Dendritic cell treated with granulocyte-macrophage colony-stimulating factor and Interleukin-4, amounts not matched to agents 40 ng/mL and 50 ng/mL, for 4 days (primary cell): ENCODE measurements at regions of chr3 and their contacts with region 1.

Region 1: DNA sequence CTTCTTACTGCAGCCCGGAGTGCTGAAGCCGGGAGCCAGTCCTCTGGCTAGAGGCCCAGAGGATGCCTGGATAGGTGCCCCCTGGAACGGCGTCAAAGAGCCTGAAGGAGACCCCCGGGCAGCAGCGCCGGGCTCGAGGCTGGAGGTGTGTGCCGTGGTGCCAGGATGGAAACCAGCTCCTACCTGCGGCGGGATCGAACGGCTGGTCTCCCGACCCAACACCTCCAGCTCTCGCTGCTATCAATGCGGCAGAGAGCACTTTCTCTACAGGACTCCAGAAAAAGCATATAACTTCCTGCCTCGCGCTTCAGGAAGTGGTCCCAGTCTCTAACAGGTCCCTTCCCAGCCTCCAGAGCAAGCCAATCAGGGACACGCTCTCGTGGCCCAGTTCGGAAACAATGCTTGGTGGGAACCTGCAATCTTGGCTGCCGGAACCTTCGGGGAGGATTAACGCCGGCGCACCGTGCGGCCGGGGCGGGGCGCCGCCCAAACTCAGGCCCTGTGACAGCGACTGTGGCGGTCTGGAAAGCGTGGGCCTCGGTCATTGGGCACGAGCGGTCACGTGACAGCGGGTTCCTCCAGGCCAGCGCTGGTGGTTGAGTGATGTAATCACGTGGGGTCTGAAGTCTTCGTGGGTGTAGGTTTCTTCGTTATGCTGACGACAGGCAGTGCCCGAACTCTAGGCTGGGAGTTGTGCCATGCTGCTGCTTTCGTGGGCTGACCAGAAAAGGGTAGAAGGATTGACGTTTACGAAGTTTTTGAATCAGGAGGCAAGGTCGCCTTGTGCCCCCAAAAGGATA is at the start of gene SLC33A1:
- H3K4me3 Mint-ChIP-seq: peak within 1 kb of the TSS; percentile 93
- H3K27ac Mint-ChIP-seq: peak within 1 kb of the TSS; percentile 100
- H3K4me1 Mint-ChIP-seq: peaks cover 36% of the 10 kb centered on the region
- H3K27me3 Mint-ChIP-seq: no peaks in the 10 kb centered on the region

Region 2: GRCh38 chr3:154829929-154830328 is 1024.4 kb before region 1 on chr3:
- intact Hi-C with region 1: no loop called
- H3K4me3 Mint-ChIP-seq: no peak overlapping the region
- H3K27ac Mint-ChIP-seq: no peak overlapping the region
- H3K4me1 Mint-ChIP-seq: no peaks in the 10 kb centered on the region
- H3K27me3 Mint-ChIP-seq: no peaks in the 10 kb centered on the region

Region 3: DNA sequence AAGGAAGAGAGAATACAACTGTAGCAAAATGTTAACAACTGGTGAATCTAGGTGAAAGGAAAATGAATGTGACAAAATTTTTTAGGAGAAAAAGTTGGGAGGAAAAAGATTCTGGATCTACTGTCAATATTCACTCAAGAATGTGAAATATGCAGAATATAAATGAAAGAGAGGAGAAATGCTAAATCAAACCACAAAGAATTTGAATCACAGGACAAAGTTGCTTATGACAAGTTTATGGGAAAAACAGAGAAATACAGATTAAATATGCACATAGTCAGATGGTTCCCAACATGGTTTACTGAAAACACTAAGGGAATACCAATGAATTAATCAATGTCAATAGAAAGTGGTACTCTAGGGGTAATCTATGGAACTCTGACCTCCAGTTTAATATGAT is 75.9 kb before region 1 on chr3:
- intact Hi-C with region 1: no loop called
- H3K4me3 Mint-ChIP-seq: no peak overlapping the region
- H3K27ac Mint-ChIP-seq: no peak overlapping the region
- H3K4me1 Mint-ChIP-seq: no peaks in the 10 kb centered on the region
- H3K27me3 Mint-ChIP-seq: no peaks in the 10 kb centered on the region

Region 4: DNA sequence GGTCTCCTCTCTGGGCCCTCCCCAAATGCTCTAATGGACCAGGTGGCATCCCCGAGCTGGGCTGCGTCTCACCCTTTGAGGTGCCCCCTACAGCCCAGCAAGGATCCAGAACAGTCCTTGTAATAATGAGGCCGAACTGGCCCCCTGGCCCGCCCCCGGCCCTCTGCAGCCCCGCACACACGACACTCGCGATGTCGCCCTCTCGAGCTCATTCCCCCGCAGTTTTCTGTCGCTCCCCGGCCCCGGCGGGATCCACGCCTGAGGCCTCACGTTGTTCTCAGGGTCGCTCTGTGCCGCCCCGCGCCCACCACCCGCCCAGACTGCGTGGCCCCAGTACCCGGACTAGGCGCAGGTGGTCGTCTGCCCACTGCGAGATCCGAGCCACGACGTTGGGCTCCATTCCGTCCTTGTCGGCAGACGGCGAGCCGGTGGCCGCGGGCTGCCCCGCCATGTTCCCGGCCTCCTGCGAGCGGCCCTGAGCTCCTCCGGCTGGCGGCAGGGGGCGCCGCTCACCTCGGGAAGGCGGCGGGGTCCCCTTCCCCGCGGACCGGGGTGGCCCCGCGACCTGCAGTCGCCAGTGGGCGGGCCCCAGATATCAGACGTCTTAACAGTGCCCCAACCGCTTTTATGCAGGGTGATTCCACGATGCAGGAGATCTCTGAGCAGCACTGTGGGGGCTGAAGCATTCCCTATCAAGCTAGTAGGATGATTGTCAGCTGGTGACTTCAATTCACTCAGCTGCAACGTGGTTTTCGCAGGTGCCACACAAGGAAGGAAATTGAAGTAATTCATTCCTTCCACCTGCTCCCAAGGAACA is 48.3 kb before region 1 on chr3 and contains the start of gene C3orf33:
- intact Hi-C with region 1: loop called (anchors 10 kb)
- H3K4me3 Mint-ChIP-seq: peak within 1 kb of the TSS; percentile 92
- H3K27ac Mint-ChIP-seq: peak within 1 kb of the TSS; percentile 92
- H3K4me1 Mint-ChIP-seq: no peaks in the 10 kb centered on the region
- H3K27me3 Mint-ChIP-seq: no peaks in the 10 kb centered on the region

Region 5: GRCh38 chr3:155835341-155836071 is 18.8 kb before region 1 on chr3:
- intact Hi-C with region 1: loop called (anchors 1 kb)
- H3K4me3 Mint-ChIP-seq: no peak overlapping the region
- H3K27ac Mint-ChIP-seq: no peak overlapping the region
- H3K4me1 Mint-ChIP-seq: no peaks in the 10 kb centered on the region
- H3K27me3 Mint-ChIP-seq: no peaks in the 10 kb centered on the region

Region 6: DNA sequence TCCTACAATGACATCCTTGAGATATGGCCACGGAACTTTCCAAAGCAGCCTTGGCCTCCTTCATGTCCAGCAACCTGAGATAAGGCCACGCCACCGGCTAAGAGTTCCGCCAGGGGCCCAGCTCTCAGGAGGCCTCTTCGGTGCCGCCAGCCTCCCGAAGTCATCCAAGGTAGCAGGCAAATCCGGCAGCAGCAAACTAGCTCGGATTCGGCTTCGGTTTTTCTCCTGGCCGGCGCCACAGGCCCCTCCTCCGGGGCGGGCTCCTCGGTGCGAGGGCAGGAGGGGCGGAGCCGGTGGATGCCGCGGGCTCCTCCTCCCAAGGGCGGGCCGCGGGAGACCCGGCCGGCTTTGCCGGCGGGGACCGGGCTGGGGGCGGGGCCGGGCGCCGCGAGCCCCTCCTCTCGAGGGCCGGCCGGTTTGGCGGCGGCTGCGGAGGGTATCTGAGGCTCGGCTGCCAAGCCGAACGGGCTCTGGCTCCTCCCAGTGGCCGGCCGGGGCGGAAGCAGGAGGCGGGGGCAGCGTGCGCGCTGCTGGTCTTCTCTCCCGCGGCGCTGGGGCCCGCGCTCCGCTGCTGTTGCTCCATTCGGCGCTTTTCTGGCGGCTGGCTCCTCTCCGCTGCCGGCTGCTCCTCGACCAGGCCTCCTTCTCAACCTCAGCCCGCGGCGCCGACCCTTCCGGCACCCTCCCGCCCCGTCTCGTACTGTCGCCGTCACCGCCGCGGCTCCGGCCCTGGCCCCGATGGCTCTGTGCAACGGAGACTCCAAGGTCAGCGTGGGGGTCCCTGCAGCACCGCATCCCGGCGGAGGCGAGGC is 16.0 kb after region 1 on chr3 and contains the start of gene GMPS:
- intact Hi-C with region 1: loop called (anchors 1 kb)
- H3K4me3 Mint-ChIP-seq: peak within 1 kb of the TSS; percentile 95
- H3K27ac Mint-ChIP-seq: peak within 1 kb of the TSS; percentile 93
- H3K4me1 Mint-ChIP-seq: peaks cover 13% of the 10 kb centered on the region
- H3K27me3 Mint-ChIP-seq: no peaks in the 10 kb centered on the region

Region 7: DNA sequence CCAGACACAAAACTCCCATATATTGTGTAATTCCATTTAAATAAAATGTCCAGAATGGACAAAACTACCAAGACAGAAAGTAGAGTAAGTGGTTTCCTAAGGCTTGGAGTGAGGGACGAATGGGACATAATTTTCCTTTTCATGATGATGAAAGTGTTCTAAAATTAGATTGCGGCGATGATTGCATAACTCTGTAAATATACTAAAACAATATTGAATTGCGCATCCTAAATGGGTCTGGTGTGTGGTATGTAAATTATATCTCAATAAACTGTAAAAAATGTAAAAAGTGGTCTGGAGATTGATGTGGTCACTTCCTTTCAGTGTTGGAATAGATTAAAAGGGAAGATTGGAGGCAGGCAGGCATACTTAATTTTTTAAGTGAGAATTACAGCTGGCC is 160.1 kb after region 1 on chr3:
- intact Hi-C with region 1: no loop called
- H3K4me3 Mint-ChIP-seq: no peak overlapping the region
- H3K27ac Mint-ChIP-seq: no peak overlapping the region
- H3K4me1 Mint-ChIP-seq: no peaks in the 10 kb centered on the region
- H3K27me3 Mint-ChIP-seq: no peaks in the 10 kb centered on the region

Region 8: DNA sequence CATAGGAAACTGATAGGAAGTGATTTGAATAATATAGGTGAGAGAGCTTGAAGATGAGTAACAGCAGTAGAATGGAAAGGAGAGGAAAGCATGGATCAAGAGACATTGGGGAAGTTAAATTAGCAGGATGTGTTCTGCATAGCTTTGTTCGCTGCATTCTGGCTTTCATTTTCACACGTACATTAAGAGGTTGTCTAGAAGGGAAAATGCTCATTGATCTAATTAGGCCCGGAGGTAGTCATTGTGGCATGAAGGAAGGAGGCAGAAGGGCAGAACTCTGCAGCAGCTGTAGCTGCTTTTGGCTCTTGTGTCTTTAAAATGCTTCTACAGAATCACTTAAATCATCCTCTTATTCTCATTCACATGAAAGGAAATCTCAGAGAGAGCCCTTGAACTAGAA is 306.3 kb after region 1 on chr3:
- intact Hi-C with region 1: no loop called
- H3K4me3 Mint-ChIP-seq: peak overlapping the region; percentile 21
- H3K27ac Mint-ChIP-seq: no peak overlapping the region
- H3K4me1 Mint-ChIP-seq: peaks cover 12% of the 10 kb centered on the region
- H3K27me3 Mint-ChIP-seq: no peaks in the 10 kb centered on the region